ENCODE measurements at regions of chr11 and their contacts with region 1.

Region 1: GRCh38 chr11:86068951-86069407 is at the start of gene PICALM:
- DNase-seq: peak; percentile 99
- ATAC-seq: peak; percentile 87
- H3K4me3 Mint-ChIP-seq: peak within 1 kb of the TSS; percentile 89
- H3K27ac Mint-ChIP-seq: peak within 1 kb of the TSS; percentile 91
- H3K4me1 Mint-ChIP-seq: peaks cover 27% of the 10 kb centered on the region
- H3K27me3 Mint-ChIP-seq: no peaks in the 10 kb centered on the region
- total RNA-seq, gene PICALM: 63.8 to 88.3 TPM

Region 2: GRCh38 chr11:85664615-85665481 is 404.1 kb before region 1 on chr11 and contains the start of gene CREBZF:
- CTCF ChIA-PET with region 1: no interaction called
- POLR2A ChIA-PET with region 1: no interaction called
- intact Hi-C with region 1: loop called (anchors 1 to 10 kb)
- DNase-seq: peak; percentile 97
- ATAC-seq: peak; percentile 88
- H3K4me3 Mint-ChIP-seq: peak within 1 kb of the TSS; percentile 100
- H3K27ac Mint-ChIP-seq: peak within 1 kb of the TSS; percentile 99
- H3K4me1 Mint-ChIP-seq: peaks cover 29% of the 10 kb centered on the region
- H3K27me3 Mint-ChIP-seq: no peaks in the 10 kb centered on the region
- total RNA-seq, gene CREBZF: 30.4 to 35.9 TPM

Region 3: GRCh38 chr11:86047275-86047991 is 21.5 kb before region 1 on chr11:
- CTCF ChIA-PET with region 1: interaction called, 33 read pairs
- POLR2A ChIA-PET with region 1: interaction called, 9 read pairs
- intact Hi-C with region 1: loop called (anchors 1 kb)
- DNase-seq: peak; percentile 75
- ATAC-seq: peak; percentile 73
- H3K4me3 Mint-ChIP-seq: peak overlapping the region; percentile 65
- H3K27ac Mint-ChIP-seq: peak overlapping the region; percentile 96
- H3K4me1 Mint-ChIP-seq: peaks cover 96% of the 10 kb centered on the region
- H3K27me3 Mint-ChIP-seq: no peaks in the 10 kb centered on the region

Region 4: GRCh38 chr11:86182976-86183584 is 114.1 kb after region 1 on chr11:
- CTCF ChIA-PET with region 1: interaction called, 3 read pairs
- POLR2A ChIA-PET with region 1: interaction called, 5 read pairs
- intact Hi-C with region 1: loop called (anchors 2 kb)
- DNase-seq: peak; percentile 89
- ATAC-seq: peak; percentile 84
- H3K4me3 Mint-ChIP-seq: no peak overlapping the region
- H3K27ac Mint-ChIP-seq: no peak overlapping the region
- H3K4me1 Mint-ChIP-seq: peaks cover 6% of the 10 kb centered on the region
- H3K27me3 Mint-ChIP-seq: no peaks in the 10 kb centered on the region

Region 5: GRCh38 chr11:86218125-86219084 is 149.4 kb after region 1 on chr11:
- CTCF ChIA-PET with region 1: interaction called, 16 read pairs
- POLR2A ChIA-PET with region 1: interaction called, 7 read pairs
- intact Hi-C with region 1: loop called in 1 of 2 experiments (anchors 1 kb)
- DNase-seq: peak; percentile 79
- ATAC-seq: peak; percentile 40
- H3K4me3 Mint-ChIP-seq: peak overlapping the region; percentile 26
- H3K27ac Mint-ChIP-seq: peak overlapping the region; percentile 91
- H3K4me1 Mint-ChIP-seq: peaks cover 78% of the 10 kb centered on the region
- H3K27me3 Mint-ChIP-seq: no peaks in the 10 kb centered on the region

Region 6: DNA sequence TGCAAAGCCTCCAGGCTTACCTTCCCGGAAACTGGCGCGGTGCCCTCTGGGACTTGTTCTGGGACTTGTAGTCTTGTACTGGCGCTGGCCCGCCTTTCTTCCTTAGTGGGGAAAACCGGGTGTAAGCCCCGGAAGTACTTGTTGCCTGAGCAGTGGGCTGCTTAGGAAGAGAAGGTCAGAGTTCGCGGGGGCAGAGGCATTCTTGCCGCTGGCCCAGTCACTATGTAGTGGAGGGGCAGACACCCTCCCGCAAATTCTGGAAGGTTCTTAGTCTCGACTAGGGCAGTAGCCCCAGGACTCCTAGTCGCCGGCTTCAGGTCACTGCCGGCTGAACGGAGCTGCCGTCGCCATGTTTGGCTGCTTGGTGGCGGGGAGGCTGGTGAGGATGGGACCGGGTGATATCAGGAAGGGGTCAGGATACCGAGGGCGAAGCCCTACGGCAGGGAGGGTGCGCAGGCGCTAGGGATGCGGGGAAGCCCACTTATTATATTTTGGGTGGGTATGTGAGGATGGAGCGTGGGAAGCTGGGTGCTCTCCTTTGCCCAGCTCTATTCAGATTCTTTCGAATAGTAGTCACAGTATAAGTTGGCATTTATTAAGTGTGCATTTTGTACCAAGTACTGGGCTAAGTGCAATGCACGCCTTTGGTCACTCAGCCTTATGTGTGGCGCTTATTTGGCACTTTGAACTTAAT is 233.3 kb after region 1 on chr11 and contains the start of gene HIKESHI:
- CTCF ChIA-PET with region 1: interaction called, 3 read pairs
- POLR2A ChIA-PET with region 1: interaction called, 3 read pairs
- intact Hi-C with region 1: loop called in 1 of 2 experiments (anchors 2 kb)
- DNase-seq: peak; percentile 97
- ATAC-seq: peak; percentile 99
- H3K4me3 Mint-ChIP-seq: peak within 1 kb of the TSS; percentile 96
- H3K27ac Mint-ChIP-seq: peak within 1 kb of the TSS; percentile 99
- H3K4me1 Mint-ChIP-seq: peaks cover 31% of the 10 kb centered on the region
- H3K27me3 Mint-ChIP-seq: no peaks in the 10 kb centered on the region
- total RNA-seq, gene HIKESHI: 50.2 to 51.3 TPM